ENCODE measurements at regions of chr3 and their contacts with region 1.

Region 1: DNA sequence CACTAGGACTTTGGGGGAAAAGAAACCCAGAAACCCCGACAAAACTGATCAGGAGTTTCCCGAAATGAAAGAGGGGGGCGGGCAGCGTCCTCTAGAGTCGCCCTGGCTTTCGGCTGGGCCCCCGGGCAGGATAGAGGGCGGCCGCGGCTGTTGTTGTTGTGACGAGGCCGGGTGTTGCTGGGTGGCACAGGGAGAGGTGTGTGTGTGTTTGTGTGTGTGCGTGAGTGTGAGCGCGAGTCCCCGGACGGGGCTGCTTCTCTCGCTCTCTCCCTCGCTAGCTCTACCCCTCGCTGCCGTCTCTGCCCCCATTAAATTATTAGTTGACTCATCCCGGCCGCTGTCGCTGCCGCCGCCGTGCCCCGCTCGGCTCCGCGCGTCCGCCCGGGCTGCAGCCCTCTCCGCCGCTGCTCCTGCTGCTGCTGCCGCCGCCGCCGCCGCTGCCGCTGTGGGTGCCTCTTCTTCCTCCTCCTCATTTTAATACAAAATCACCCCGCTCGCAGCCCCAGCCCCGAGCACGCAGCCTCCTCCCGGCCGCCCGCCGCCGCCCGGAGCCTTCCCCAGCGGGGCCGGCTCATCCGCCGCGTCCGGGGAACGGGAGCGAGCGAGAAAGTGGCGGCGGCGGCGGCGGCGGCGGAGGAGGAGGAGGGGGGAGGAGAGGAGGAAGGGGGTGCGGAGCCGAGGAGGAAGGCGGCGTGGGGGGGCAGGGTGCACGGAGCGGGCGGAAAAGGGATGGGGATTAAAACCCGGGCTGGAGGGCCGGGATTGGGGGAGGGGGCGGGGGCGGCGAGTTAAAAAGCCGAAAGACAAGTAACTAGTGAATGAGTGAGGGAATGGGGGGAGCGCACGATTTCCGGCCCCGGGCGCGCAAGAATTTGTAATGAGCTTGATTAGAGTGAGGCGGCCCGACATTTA is at the start of gene SATB1:
- DNase-seq: peak; percentile 87 to 92
- ATAC-seq: peak; percentile 77 to 88 (median 83)
- H3K4me3 ChIP-seq: peak within 1 kb of the TSS; percentile 50 to 87 (median 81)
- H3K27ac ChIP-seq: peak within 1 kb of the TSS; percentile 89 to 96 (median 93)
- H3K4me1 ChIP-seq: peaks cover 0 to 42% (median 10%) of the 10 kb centered on the region in 9 donors
- H3K27me3 ChIP-seq: no peaks in the 10 kb centered on the region
- CTCF ChIP-seq: no peak
- total RNA-seq, gene SATB1: 34.2 to 73.7 (median 52.0) TPM

Region 2: GRCh38 chr3:18444595-18445400 is 19.8 kb after region 1 on chr3:
- intact Hi-C with region 1: loop called in 1 of 10 experiments (anchors 2 kb)
- DNase-seq: peak; percentile 47 to 75
- ATAC-seq: peak; percentile 79 to 97 (median 92)
- H3K4me3 ChIP-seq: peak overlapping the region; percentile 46 to 66 (median 58)
- H3K27ac ChIP-seq: peak overlapping the region in 2 of 10 donors; percentile 23 to 79
- H3K4me1 ChIP-seq: peaks cover 0 to 30% (median 18%) of the 10 kb centered on the region in 9 donors
- H3K27me3 ChIP-seq: peaks cover 0 to 63% (median 32%) of the 10 kb centered on the region in 7 donors
- CTCF ChIP-seq: peak in 6 of 9 donors; percentile 31 to 64 (median 45)

Measured in heart right ventricle (tissue), 16 donors.